ENCODE measurements at regions of chr1 and their contacts with region 1.

Region 1: GRCh38 chr1:25819576-25820246 is at the start of gene MTFR1L:
- DNase-seq: peak; percentile 97
- ATAC-seq: peak; percentile 92
- H3K4me3 Mint-ChIP-seq: peak within 1 kb of the TSS; percentile 87
- H3K27ac Mint-ChIP-seq: peak within 1 kb of the TSS; percentile 93
- H3K4me1 Mint-ChIP-seq: peaks cover 33% of the 10 kb centered on the region
- H3K27me3 Mint-ChIP-seq: no peaks in the 10 kb centered on the region
- total RNA-seq, gene MTFR1L: 27.7 to 30.8 TPM

Region 2: GRCh38 chr1:25338188-25338981 is 481.3 kb before region 1 on chr1 and contains the start of gene TMEM50A:
- CTCF ChIA-PET with region 1: no interaction called
- POLR2A ChIA-PET with region 1: no interaction called
- intact Hi-C with region 1: loop called in 1 of 2 experiments (anchors 2 kb)
- DNase-seq: peak; percentile 93
- ATAC-seq: peak; percentile 76
- H3K4me3 Mint-ChIP-seq: peak within 1 kb of the TSS; percentile 94
- H3K27ac Mint-ChIP-seq: peak within 1 kb of the TSS; percentile 93
- H3K4me1 Mint-ChIP-seq: peaks cover 31% of the 10 kb centered on the region
- H3K27me3 Mint-ChIP-seq: no peaks in the 10 kb centered on the region
- total RNA-seq, gene TMEM50A: 98.0 to 120 TPM

Region 3: GRCh38 chr1:25543425-25544242 is 276.1 kb before region 1 on chr1 and contains the start of gene LDLRAP1:
- CTCF ChIA-PET with region 1: no interaction called
- POLR2A ChIA-PET with region 1: no interaction called
- intact Hi-C with region 1: loop called in 1 of 2 experiments (anchors 1 kb)
- DNase-seq: peak; percentile 78
- ATAC-seq: peak; percentile 89
- H3K4me3 Mint-ChIP-seq: peak within 1 kb of the TSS; percentile 80
- H3K27ac Mint-ChIP-seq: peak within 1 kb of the TSS; percentile 75
- H3K4me1 Mint-ChIP-seq: peaks cover 34% of the 10 kb centered on the region
- H3K27me3 Mint-ChIP-seq: no peaks in the 10 kb centered on the region
- total RNA-seq, gene LDLRAP1: 13.0 to 14.6 TPM

Region 4: DNA sequence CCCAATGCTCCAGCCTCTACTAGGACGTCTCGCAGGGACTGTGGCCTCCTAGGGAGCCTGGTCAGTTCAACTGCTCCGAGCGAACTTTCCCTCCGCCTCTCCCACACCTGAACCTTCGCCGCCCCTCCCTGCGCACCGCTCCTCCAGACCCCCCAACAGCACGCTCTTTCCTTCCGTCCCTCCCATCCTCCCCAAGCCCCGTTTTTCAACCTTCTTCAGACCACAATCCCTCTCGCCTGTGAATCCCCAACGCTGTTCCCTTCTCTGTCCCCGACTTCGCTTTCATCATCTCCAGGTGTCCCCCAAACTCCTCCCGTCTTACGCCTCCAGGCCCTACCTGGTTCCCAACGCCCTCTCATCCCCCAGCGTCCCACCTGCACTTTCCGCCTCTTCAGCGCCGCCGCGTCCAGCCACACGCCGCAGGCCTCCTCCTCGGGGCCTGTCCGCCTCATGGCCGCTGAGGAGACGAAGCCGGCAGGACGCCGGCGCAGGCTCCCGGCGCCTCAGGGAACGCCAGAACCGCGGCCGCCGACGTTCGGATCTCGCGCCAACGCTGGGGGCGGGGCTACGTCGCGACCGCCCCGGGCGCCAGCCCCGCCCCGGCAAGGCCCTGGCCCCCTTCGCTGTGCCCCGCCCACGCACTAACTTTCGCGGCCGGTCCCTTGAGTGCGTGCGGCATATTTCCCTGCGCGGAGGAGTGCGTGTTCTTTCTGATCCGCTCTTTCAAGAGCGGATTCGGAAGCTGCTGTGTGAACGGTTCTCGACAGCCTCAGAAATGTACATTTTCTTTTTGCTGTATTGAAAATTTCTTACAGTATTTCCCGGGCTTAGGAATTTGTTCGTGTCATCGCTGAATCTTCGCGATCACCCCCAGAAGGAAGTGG is 39.4 kb after region 1 on chr1 and contains the start of gene AUNIP:
- CTCF ChIA-PET with region 1: interaction called, 3 read pairs
- POLR2A ChIA-PET with region 1: no interaction called
- intact Hi-C with region 1: loop called in 1 of 2 experiments (anchors 1 kb)
- DNase-seq: peak; percentile 97
- ATAC-seq: peak; percentile 95
- H3K4me3 Mint-ChIP-seq: peak within 1 kb of the TSS; percentile 94
- H3K27ac Mint-ChIP-seq: peak within 1 kb of the TSS; percentile 93
- H3K4me1 Mint-ChIP-seq: peaks cover 13% of the 10 kb centered on the region
- H3K27me3 Mint-ChIP-seq: no peaks in the 10 kb centered on the region
- total RNA-seq, gene AUNIP: 9.6 to 12.9 TPM

Region 5: DNA sequence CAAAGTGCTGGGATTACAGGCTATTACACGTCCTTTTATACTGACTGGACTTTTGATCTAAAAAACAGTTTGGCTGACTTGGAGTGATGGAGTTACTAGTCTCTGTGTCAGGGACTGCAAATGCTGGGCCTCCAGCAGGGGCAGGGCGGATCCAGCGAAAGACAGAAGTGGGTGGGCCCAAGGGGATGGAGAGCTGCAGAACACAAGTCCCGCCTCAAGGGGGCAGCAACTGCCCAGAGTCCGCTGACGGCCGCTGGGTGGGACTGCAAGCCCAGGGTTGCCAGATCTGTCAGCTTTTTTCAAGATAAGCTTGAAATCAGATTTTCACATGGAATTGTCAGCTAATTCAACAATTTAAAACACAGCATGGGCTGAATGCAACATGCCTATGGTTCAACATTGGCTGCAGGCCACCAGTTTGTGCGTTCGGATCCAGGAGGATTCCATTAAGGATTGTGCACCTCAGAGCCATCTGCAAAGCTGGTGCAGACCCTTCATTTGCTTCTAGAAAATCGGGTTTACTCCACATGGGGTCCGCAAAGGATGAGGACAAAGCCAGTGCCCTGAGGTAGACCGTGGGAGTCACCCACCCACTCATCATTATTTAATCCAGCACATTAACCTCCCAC is 75.8 kb after region 1 on chr1:
- CTCF ChIA-PET with region 1: interaction called, 4 read pairs
- POLR2A ChIA-PET with region 1: no interaction called
- intact Hi-C with region 1: loop called in 1 of 2 experiments (anchors 2 kb)
- DNase-seq: peak; percentile 95
- ATAC-seq: peak; percentile 98
- H3K4me3 Mint-ChIP-seq: no peak overlapping the region
- H3K27ac Mint-ChIP-seq: no peak overlapping the region
- H3K4me1 Mint-ChIP-seq: peaks cover 15% of the 10 kb centered on the region
- H3K27me3 Mint-ChIP-seq: no peaks in the 10 kb centered on the region

Region 6: GRCh38 chr1:26066857-26067256 is 247.1 kb after region 1 on chr1:
- CTCF ChIA-PET with region 1: no interaction called
- POLR2A ChIA-PET with region 1: no interaction called
- intact Hi-C with region 1: no loop called
- DNase-seq: no peak
- ATAC-seq: no peak
- H3K4me3 Mint-ChIP-seq: no peak overlapping the region
- H3K27ac Mint-ChIP-seq: no peak overlapping the region
- H3K4me1 Mint-ChIP-seq: no peaks in the 10 kb centered on the region
- H3K27me3 Mint-ChIP-seq: no peaks in the 10 kb centered on the region